IMR-90 (cell line): ENCODE measurements at regions of chr19 and their contacts with region 1.

Region 1: DNA sequence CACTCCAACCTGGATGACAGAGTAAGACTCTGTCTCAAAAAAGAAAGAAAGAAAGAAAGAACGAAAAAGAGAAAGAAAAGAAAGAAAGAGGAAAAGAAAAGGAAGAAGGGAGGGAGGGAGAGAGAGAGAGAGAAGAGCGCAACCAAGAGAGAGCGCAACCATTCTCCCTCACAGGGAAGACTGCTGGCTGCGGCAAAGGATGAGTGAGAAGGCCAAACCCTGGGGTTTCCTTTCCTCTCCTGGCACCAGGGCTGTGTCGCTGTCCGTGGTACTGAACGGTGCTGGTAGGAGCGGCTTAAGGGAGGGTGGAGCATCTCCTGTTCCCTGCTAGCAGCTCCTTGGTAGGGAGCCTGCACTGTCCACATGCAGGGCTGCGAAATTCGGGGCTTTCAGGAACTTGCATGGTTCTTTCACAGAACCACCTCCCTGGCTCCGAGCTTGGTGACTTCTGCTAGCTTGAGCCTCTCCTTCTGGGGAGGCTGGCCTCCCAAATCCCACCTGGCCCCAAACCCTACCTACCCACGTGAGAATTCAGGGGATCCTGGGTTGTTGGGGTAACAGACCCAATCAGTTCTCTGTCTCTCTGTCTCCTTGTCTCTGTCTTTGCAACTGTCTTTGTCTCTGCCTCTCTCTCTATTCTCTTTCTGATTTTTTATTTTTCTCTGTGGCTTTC is 51.1 kb upstream of the ZNRF4 start:
- DNase-seq: peak; percentile 81
- ATAC-seq: peak; percentile 100
- H3K4me3 ChIP-seq: no peak overlapping the region
- H3K27ac ChIP-seq: no peak overlapping the region
- H3K4me1 ChIP-seq: no peaks in the 10 kb centered on the region
- H3K27me3 ChIP-seq: peaks cover 4% of the 10 kb centered on the region; the same call in 1 of the 2 replicates
- CTCF ChIP-seq: no peak
- POLR2A ChIP-seq: no peak
- RAD21 ChIP-seq: peak; percentile 31; the same call in 1 of the 2 replicates

Region 2: DNA sequence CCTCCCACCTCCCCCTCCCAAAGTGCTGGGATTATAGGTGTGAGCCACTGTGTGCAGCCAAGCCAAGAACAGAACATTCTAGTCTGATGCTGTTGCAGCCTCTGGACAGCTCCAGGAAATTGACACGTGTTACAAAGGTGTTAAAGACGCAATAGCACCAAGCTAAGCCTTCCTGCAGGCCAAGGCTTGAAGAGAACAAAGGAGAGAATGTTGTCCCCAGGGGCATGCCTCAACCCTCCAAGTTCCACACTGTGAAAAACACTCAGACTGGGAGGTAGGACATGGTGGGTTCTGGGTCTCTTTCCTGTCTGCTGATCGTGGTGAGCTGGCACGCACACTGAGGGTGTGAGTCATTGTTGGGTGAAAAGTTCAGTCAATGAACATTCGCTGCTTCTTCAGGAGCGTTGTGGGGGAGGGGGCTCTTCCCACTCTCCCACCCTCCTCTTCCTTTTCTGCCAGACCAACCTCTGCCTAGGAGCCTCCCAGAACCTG is 58.2 kb before region 1 on chr19:
- CTCF ChIA-PET with region 1: no interaction called
- POLR2A ChIA-PET with region 1: no interaction called
- dilution Hi-C with region 1: no loop called
- in situ Hi-C with region 1: no loop called
- intact Hi-C with region 1: loop called (anchors 5 kb)
- DNase-seq: peak; percentile 60
- ATAC-seq: peak; percentile 50
- H3K4me3 ChIP-seq: no peak overlapping the region
- H3K27ac ChIP-seq: no peak overlapping the region
- H3K4me1 ChIP-seq: no peaks in the 10 kb centered on the region
- H3K27me3 ChIP-seq: peaks cover 4% of the 10 kb centered on the region
- CTCF ChIP-seq: no peak
- POLR2A ChIP-seq: no peak
- RAD21 ChIP-seq: 0 out of 2 replicates have a peak, but pooled peaks have one; percentile 5

Region 3: GRCh38 chr19:6150289-6150688 is 746.2 kb after region 1 on chr19:
- CTCF ChIA-PET with region 1: no interaction called
- POLR2A ChIA-PET with region 1: no interaction called
- dilution Hi-C with region 1: no loop called
- in situ Hi-C with region 1: no loop called
- intact Hi-C with region 1: no loop called
- DNase-seq: peak; percentile 9
- ATAC-seq: no peak; the same call in 1 of the 2 replicates
- H3K4me3 ChIP-seq: no peak overlapping the region
- H3K27ac ChIP-seq: no peak overlapping the region
- H3K4me1 ChIP-seq: no peaks in the 10 kb centered on the region
- H3K27me3 ChIP-seq: no peaks in the 10 kb centered on the region
- CTCF ChIP-seq: no peak
- POLR2A ChIP-seq: no peak
- RAD21 ChIP-seq: no peak